Activated CD4-positive, alpha-beta memory T cell treated with anti-CD3 and anti-CD28 coated beads for 36 hours (primary cell): ENCODE measurements at regions of chr2 and their contacts with region 1.

Region 1: DNA sequence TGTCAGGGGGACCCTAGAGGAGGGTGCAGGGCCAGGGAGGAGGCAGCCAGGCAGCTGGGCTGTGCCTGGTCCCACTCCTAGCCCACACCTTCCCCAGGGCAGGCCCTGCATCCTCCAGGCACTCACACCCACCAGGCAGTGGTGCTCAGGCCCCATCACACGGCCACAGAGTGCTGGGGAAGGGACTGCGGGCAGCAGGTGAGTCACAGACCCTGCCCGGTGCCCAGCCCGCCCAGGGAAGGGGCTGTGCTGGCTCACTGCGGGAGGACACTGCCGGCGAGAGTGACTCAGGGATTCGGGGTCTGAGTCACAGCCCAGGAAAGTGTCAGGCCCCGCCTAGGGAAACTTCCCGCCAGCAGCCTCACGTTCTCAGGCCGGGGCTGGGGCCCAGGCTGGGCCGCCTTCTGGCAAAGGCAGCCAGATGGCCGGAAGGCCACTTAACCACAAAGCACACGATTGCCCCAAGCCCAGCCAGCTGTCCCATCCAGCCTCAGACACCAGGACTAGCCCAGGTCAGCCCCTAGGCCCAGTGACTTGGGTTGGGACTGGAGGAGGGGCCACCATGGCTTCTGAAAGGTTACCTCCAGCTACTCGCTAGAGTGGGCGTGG is 42.2 kb downstream of the BIN1 start:
- DNase-seq: peak; percentile 93
- H3K4me3 Mint-ChIP-seq: no peak overlapping the region
- H3K27ac Mint-ChIP-seq: peak overlapping the region; percentile 75
- H3K4me1 Mint-ChIP-seq: peaks cover 24% of the 10 kb centered on the region
- H3K27me3 Mint-ChIP-seq: no peaks in the 10 kb centered on the region

Region 2: DNA sequence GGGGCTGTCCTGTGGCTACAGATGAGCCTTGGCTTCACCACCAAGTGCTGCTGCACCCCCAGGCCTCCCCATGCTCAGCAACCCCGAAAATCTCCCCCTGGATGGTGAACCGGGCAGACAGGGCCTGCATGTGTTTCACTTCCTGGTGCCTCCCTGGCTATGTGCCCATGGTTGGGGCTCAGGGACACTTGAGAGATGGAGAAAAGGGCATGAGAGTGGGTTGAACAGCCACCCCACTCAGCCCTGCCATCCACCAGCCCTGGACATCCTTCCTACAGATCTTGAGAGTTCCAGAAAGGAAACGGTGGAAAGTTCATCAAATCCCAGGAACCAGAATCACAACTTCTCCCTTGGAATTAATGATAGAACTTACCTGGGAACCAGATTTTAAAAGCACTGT is 240.8 kb before region 1 on chr2:
- CTCF ChIA-PET with region 1: no interaction called
- POLR2A ChIA-PET with region 1: no interaction called
- intact Hi-C with region 1: no loop called
- DNase-seq: no peak
- H3K4me3 Mint-ChIP-seq: no peak overlapping the region
- H3K27ac Mint-ChIP-seq: no peak overlapping the region
- H3K4me1 Mint-ChIP-seq: no peaks in the 10 kb centered on the region
- H3K27me3 Mint-ChIP-seq: peaks cover 13% of the 10 kb centered on the region

Region 3: DNA sequence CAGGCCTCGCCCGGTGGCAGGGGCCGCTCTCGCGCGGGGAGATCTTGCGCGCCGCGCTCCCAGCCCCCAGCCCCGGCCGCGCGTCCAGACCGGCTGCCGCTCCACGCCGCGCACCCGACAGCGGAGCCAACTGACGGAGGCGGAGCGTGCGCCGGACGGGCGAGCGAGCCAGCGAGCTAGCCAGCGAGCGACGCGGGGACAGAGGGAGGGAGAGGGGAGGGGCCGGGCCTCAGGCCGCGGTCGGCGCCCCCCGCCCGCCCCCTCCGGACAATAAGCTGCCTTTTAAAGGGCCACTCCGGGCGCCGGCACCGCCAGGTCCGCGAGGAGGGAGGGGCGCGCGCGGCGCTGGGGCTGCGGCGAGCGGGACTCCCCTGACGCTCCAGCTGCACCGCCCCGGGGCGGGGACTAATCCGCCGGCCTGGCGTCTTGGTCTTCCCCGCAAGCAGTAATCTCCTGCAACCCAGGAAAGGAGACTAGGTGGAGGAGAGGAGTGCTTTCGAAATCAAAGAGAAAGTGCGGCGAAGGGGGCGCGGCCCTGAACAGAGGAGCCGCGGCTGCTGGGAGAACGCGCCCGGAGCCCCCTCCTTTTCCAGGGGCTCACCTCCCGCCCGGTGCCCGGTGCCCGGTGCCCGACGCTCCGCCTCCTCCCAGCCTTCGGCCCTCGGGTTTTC is 42.3 kb after region 1 on chr2 and contains the start of gene BIN1:
- CTCF ChIA-PET with region 1: interaction called, 11 read pairs
- POLR2A ChIA-PET with region 1: no interaction called
- intact Hi-C with region 1: loop called (anchors 1 kb)
- DNase-seq: peak; percentile 82
- H3K4me3 Mint-ChIP-seq: peak within 1 kb of the TSS; percentile 70
- H3K27ac Mint-ChIP-seq: no peak within 1 kb of the TSS
- H3K4me1 Mint-ChIP-seq: peaks cover 4% of the 10 kb centered on the region
- H3K27me3 Mint-ChIP-seq: peaks cover 12% of the 10 kb centered on the region
- total RNA-seq, gene BIN1: 55.4 to 58.2 TPM

Region 4: GRCh38 chr2:127174136-127174535 is 109.4 kb after region 1 on chr2:
- CTCF ChIA-PET with region 1: interaction called, 17 read pairs
- POLR2A ChIA-PET with region 1: no interaction called
- intact Hi-C with region 1: no loop called
- DNase-seq: peak; percentile 13
- H3K4me3 Mint-ChIP-seq: no peak overlapping the region
- H3K27ac Mint-ChIP-seq: no peak overlapping the region
- H3K4me1 Mint-ChIP-seq: no peaks in the 10 kb centered on the region
- H3K27me3 Mint-ChIP-seq: peaks cover 3% of the 10 kb centered on the region

Region 5: GRCh38 chr2:127293748-127294562 is 229.2 kb after region 1 on chr2 and contains the start of gene ERCC3:
- CTCF ChIA-PET with region 1: interaction called, 6 read pairs
- POLR2A ChIA-PET with region 1: no interaction called
- intact Hi-C with region 1: loop called (anchors 2 kb)
- DNase-seq: peak; percentile 89
- H3K4me3 Mint-ChIP-seq: peak within 1 kb of the TSS; percentile 100
- H3K27ac Mint-ChIP-seq: peak within 1 kb of the TSS; percentile 97
- H3K4me1 Mint-ChIP-seq: peaks cover 28% of the 10 kb centered on the region
- H3K27me3 Mint-ChIP-seq: no peaks in the 10 kb centered on the region
- total RNA-seq, gene ERCC3: 46.1 to 47.3 TPM